Ascending aorta (tissue), 2 donors: ENCODE measurements at regions of chr18 and their contacts with region 1.

Region 1: GRCh38 chr18:2985628-2986027 is 27.3 kb downstream of the LPIN2 start:
- DNase-seq: no peak
- H3K4me3 ChIP-seq: no peak overlapping the region
- H3K27ac ChIP-seq: no peak overlapping the region
- H3K4me1 ChIP-seq: peaks cover 0 to 21% of the 10 kb centered on the region in 2 donors
- H3K27me3 ChIP-seq: no peaks in the 10 kb centered on the region
- CTCF ChIP-seq: peak; percentile 26 to 52 (median 30)

Region 2: GRCh38 chr18:2606335-2606734 is 379.3 kb before region 1 on chr18:
- intact Hi-C with region 1: no loop called
- DNase-seq: no peak
- H3K4me3 ChIP-seq: no peak overlapping the region
- H3K27ac ChIP-seq: no peak overlapping the region
- H3K4me1 ChIP-seq: no peaks in the 10 kb centered on the region
- H3K27me3 ChIP-seq: no peaks in the 10 kb centered on the region
- CTCF ChIP-seq: no peak

Region 3: GRCh38 chr18:2961821-2962220 is 23.8 kb before region 1 on chr18:
- intact Hi-C with region 1: loop called (anchors 2 kb)
- DNase-seq: no peak
- H3K4me3 ChIP-seq: peak overlapping the region in 1 of 2 donors; percentile 23
- H3K27ac ChIP-seq: peak overlapping the region; percentile 74
- H3K4me1 ChIP-seq: peaks cover 22 to 38% of the 10 kb centered on the region in 2 donors
- H3K27me3 ChIP-seq: no peaks in the 10 kb centered on the region
- CTCF ChIP-seq: no peak

Region 4: DNA sequence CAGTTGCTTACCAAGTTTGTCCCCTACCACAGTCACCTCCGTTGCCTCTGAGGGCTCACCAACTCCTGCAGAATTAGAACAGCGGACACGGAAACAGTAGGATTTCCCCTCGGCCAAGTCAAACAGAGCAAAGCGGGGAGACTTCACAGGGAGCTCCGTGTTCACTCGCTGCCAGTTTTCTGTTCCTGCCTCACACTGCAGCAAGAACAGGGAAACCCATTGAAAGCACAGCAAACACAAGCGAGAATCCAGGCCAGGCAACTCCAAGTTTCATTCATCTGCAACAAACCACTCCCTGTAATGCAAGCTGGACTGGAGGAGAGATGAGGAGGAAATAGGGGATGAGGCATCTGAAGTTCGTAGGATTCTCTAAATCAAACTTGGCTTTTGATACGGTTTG is 149.9 kb after region 1 on chr18:
- intact Hi-C with region 1: no loop called
- DNase-seq: no peak
- H3K4me3 ChIP-seq: no peak overlapping the region
- H3K27ac ChIP-seq: no peak overlapping the region
- H3K4me1 ChIP-seq: no peaks in the 10 kb centered on the region
- H3K27me3 ChIP-seq: no peaks in the 10 kb centered on the region
- CTCF ChIP-seq: no peak